Posterior cingulate gyrus (tissue), 11 donors: ENCODE measurements at regions of chr7 and their contacts with region 1.

Region 1: DNA sequence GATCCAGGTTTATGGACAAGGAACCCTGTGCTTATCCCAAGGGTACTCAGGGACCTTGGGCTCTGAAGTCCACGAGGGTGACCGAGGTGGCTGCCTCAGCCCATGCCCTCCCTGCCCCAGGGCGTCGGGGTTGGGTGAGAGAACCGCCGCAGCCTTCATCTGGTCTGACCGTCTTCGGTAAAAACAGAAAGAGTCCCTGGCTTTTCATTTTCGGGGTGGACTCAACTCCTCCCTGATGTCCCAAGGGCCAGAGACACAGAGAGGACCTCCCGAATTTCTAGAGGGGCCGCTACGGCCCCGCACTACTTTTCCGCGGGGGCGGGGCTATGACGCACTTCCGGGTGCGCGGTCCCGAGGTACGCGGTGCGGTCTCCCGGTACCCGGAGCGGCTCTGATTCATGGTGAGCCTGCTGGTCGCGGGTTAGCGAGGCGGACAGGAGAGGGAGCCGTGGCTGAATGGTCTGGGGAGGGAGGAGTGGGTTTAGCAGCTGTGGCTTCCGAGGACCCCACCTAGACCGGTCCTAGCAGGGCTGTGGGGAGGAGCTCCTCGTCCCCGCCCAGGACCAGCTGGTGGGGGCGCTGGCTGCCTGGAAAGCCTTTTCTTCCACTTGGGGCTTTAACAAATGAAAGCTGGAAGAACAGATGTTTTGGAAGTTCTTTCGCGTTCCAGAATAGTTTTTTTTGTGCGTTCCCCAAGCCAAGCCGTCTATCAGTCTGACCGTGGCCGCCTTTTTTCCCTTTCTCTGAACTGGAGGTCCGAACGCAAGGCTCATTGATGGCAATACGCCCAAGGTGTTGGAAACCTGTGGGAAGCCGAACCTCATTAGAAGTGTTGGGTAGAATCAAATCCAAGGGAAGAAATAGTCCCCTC is at the start of gene ZSCAN21:
- DNase-seq: peak; percentile 76 to 98 (median 86)

Region 2: DNA sequence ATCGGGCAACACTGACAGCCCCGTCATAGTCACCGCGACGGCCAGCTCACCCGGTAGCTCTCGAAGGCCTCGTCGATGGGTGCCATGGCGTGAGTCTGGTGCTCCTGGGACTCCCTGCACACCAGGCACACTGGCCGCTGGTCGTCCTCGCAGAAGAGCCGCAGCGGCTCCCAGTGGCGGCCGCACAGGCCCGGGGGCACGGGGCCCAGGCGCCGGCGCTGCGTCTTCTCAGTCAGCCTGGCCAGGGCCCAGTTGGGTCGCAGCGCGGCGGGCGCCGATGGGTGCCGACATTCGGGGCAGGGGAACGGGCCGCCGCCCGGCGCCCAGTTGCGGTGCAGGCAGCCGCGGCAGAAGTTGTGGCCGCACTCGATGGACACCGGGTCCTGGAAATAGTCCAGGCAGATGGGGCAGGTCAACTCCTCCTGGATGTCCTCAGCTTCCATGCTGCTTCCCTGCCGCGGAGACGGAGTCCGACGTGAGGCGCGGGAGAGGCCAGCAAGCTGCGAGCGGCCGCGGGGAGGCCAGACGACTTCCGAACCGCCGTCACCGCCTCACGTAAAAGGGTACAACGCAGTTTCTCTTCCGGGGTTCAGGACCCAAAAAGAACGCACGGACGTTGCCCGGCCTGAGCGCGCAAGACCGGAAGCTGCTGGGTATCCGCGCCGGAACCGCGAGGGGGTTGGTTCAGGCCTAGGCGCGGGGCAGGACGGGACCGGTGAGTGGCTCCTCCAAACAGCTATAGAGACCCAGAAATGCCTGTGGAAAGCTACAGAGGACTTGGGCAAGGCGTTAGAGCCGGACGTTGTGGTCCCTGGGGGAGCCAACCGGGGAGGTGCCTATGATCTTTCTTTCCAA is 130.5 kb before region 1 on chr7 and contains the start of gene TRIM4:
- intact Hi-C with region 1: loop called (anchors 10 kb)
- DNase-seq: peak; percentile 85 to 99 (median 92)

Region 3: GRCh38 chr7:99990460-99990852 is 59.2 kb before region 1 on chr7:
- intact Hi-C with region 1: loop called (anchors 1 kb)
- DNase-seq: no peak

Region 4: GRCh38 chr7:100015232-100016209 is 34.2 kb before region 1 on chr7 and contains the start of gene ZKSCAN1:
- intact Hi-C with region 1: loop called (anchors 2 kb)
- DNase-seq: peak; percentile 82 to 98 (median 89)